ENCODE measurements at regions of chr10 and their contacts with region 1.

Region 1: GRCh38 chr10:72126184-72126871 is 38.0 kb upstream of the SPOCK2 start:
- DNase-seq: no peak
- H3K4me3 ChIP-seq: no peak overlapping the region
- H3K27ac ChIP-seq: no peak overlapping the region
- H3K4me1 ChIP-seq: no peaks in the 10 kb centered on the region
- H3K27me3 ChIP-seq: no peaks in the 10 kb centered on the region
- CTCF ChIP-seq: peak; percentile 36 to 50

Region 2: DNA sequence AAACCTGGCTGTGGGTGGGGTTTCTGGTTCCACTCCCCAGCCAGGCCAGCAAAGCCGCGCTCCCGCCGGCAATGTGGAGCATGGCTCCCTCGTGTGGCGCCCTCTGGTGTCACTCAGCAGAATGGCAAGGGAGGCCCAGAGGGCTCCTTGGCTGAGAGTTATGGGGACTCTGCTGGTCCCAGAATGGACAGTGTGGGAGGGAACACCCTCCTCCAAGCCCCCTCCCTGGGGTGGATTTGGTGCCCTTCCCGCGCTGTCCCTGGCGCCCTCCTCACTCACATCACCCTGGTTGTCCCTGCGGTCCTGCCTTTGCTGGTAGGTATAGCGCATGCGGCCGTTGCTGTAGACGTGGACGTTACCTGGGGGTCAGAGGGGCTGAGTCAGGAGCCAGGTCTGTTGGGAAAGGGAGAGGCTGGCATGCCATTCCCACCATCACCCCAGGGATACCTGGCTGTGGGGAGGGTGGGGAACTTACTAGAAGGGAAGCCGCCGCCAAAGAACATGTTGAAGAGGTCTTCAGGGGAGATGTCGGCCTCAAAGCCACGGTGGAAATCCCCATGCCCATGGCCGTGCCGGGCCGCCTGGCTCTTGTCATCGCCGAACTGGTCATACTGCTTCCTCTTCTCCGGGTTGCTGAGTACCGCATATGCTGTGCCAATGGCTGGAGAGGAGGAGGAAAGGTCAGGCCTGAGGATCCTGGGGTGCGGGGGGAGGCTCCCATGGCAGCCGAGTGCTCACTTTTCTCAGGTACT is 214.4 kb after region 1 on chr10:
- intact Hi-C with region 1: loop called (anchors 5 kb)
- DNase-seq: peak in 1 of 2 donors; percentile 77
- H3K4me3 ChIP-seq: no peak overlapping the region
- H3K27ac ChIP-seq: peak overlapping the region in 1 of 2 donors; percentile 5
- H3K4me1 ChIP-seq: peaks cover 5 to 29% (median 19%) of the 10 kb centered on the region in 4 donors
- H3K27me3 ChIP-seq: no peaks in the 10 kb centered on the region
- CTCF ChIP-seq: peak; percentile 90 to 93

Region 3: GRCh38 chr10:73386583-73386982 is 1260.3 kb after region 1 on chr10:
- intact Hi-C with region 1: no loop called
- DNase-seq: no peak
- H3K4me3 ChIP-seq: no peak overlapping the region
- H3K27ac ChIP-seq: no peak overlapping the region
- H3K4me1 ChIP-seq: no peaks in the 10 kb centered on the region
- H3K27me3 ChIP-seq: no peaks in the 10 kb centered on the region
- CTCF ChIP-seq: no peak